ENCODE measurements at regions of chr1 and their contacts with region 1.

Region 1: GRCh38 chr1:10484521-10484920 is 9.8 kb downstream of the PEX14 start:
- DNase-seq: no peak
- CTCF ChIP-seq: no peak

Region 2: GRCh38 chr1:10430216-10431069 is 54.1 kb before region 1 on chr1 and contains the start of gene CENPS:
- in situ Hi-C with region 1: loop called (anchors 10 kb)
- DNase-seq: peak; percentile 99
- CTCF ChIP-seq: peak; percentile 99